Mammary epithelial cell (primary cell): ENCODE measurements at regions of chr10 and their contacts with region 1.

Region 1: GRCh38 chr10:72692057-72692910 is at the start of gene MCU:
- DNase-seq: peak; percentile 91
- H3K4me3 ChIP-seq: peak within 1 kb of the TSS; percentile 65 to 90 (median 76)
- H3K27ac ChIP-seq: peak within 1 kb of the TSS; percentile 55
- H3K4me1 ChIP-seq: peaks cover 19% of the 10 kb centered on the region
- H3K27me3 ChIP-seq: no peaks in the 10 kb centered on the region
- CTCF ChIP-seq: no peak
- total RNA-seq, gene MCU: 21.5 to 32.7 TPM

Region 2: GRCh38 chr10:72248468-72249151 is 443.7 kb before region 1 on chr10:
- CTCF ChIA-PET with region 1: interaction called, 11 read pairs
- dilution Hi-C with region 1: no loop called
- in situ Hi-C with region 1: no loop called
- intact Hi-C with region 1: no loop called
- DNase-seq: peak; percentile 92
- H3K4me3 ChIP-seq: no peak overlapping the region
- H3K27ac ChIP-seq: peak overlapping the region; percentile 93
- H3K4me1 ChIP-seq: peaks cover 62% of the 10 kb centered on the region
- H3K27me3 ChIP-seq: no peaks in the 10 kb centered on the region
- CTCF ChIP-seq: no peak

Region 3: GRCh38 chr10:72567884-72568640 is 124.2 kb before region 1 on chr10:
- CTCF ChIA-PET with region 1: no interaction called
- dilution Hi-C with region 1: no loop called
- in situ Hi-C with region 1: no loop called
- intact Hi-C with region 1: loop called (anchors 5 kb)
- DNase-seq: no peak
- H3K4me3 ChIP-seq: no peak overlapping the region
- H3K27ac ChIP-seq: no peak overlapping the region
- H3K4me1 ChIP-seq: no peaks in the 10 kb centered on the region
- H3K27me3 ChIP-seq: no peaks in the 10 kb centered on the region
- CTCF ChIP-seq: peak; percentile 39 to 44

Region 4: DNA sequence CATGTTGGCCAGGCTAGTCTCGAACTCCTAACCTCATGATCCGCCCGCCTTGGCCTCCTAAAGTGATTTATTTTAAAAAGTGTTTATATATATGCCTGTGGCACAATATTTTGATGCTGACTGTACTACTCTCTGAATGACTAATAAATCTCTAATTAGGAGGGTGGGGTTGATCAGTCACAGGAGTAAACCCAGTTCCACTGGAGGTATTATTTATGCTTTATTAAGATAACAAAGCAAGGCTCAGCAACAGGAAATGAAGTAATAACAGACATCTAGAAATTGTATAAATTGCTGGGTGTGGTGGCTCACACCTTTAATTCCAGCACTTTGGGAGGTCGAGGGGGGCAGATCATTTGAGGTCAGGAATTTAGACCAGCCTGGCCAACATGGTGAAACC is 26.4 kb before region 1 on chr10:
- CTCF ChIA-PET with region 1: interaction called, 17 read pairs
- dilution Hi-C with region 1: no loop called
- in situ Hi-C with region 1: no loop called
- intact Hi-C with region 1: no loop called
- DNase-seq: peak; percentile 81
- H3K4me3 ChIP-seq: no peak overlapping the region
- H3K27ac ChIP-seq: peak overlapping the region; percentile 35
- H3K4me1 ChIP-seq: no peaks in the 10 kb centered on the region
- H3K27me3 ChIP-seq: no peaks in the 10 kb centered on the region
- CTCF ChIP-seq: no peak

Region 5: DNA sequence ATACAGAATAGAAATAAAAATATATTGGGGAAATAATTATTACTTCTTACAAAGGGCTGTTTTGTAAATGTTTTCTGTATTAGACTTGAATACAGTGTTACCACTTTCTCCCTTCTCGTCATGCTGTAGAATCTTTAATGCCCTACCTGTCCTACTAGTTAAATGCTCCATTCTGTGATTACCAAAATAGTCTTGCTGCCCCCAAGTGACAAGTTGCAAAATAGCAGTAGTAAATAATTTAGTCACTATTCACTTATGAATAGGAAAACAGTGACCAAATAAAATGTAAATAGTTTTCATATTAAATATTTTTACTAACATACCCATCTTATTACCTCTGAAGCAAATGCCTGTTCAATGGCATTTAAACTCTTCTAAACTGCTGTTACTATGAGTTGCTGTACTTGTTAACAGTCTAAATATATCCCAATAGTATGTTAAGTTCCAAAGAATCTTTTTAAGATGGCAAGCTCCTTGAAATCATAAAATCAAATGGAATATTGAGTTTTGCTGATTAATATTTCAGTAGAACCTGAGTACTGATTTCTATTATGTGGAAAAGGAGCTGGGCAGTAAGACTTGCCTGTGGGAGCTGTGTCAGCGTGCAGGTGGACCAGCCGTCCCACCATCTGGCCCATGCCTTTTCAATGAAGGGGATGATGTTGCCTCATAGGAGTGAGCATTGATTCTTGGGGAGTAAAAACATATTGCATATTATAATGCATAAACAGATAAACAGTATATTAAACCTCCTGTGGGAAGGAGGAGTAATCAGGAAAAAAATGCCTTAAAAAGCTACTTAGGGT is 183.2 kb after region 1 on chr10:
- CTCF ChIA-PET with region 1: no interaction called
- dilution Hi-C with region 1: no loop called
- in situ Hi-C with region 1: no loop called
- intact Hi-C with region 1: loop called (anchors 2 kb)
- DNase-seq: peak; percentile 33
- H3K4me3 ChIP-seq: no peak overlapping the region
- H3K27ac ChIP-seq: no peak overlapping the region
- H3K4me1 ChIP-seq: no peaks in the 10 kb centered on the region
- H3K27me3 ChIP-seq: no peaks in the 10 kb centered on the region
- CTCF ChIP-seq: peak; percentile 42 to 54

Region 6: DNA sequence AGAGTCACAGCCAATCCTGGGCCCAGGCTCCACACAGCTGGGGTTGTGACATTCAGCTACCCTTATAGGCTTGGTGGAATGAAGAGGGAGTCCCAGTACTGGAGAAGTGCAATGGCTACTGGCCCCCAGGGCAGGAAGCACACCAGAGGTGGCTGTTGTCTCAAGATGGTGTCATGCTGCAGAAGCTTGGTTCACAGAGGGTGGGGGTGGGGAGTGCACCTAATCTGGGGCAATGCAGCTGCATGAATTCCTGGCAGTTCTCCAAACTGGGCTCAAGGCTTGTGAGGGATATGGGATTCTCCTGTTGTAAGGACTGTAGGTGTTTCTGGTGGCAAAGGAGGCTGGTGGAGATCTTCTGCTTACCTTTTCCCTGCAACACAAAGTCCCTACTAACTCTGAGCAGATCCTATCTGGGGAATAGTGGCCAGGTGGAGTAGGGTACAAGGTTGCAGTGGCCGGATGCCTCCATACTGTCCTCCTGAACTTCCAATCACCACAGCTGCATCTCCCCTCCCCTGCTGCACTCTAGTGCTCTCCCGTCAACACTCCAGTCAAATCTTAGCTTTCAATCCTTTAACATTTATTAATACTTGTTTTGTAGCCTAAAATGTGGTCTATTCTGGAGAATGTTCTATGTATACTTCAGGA is 289.7 kb after region 1 on chr10:
- CTCF ChIA-PET with region 1: no interaction called
- dilution Hi-C with region 1: no loop called
- in situ Hi-C with region 1: no loop called
- intact Hi-C with region 1: no loop called
- DNase-seq: peak; percentile 42
- H3K4me3 ChIP-seq: no peak overlapping the region
- H3K27ac ChIP-seq: no peak overlapping the region
- H3K4me1 ChIP-seq: peaks cover 21% of the 10 kb centered on the region
- H3K27me3 ChIP-seq: no peaks in the 10 kb centered on the region
- CTCF ChIP-seq: no peak